Activated naive CD8-positive, alpha-beta T cell treated with anti-CD3 and anti-CD28 coated beads, Interleukin-2, amount 10 ng/mL, durations not matched to agents 7 days and 5 days (primary cell): ENCODE measurements at regions of chr20 and their contacts with region 1.

Region 1: DNA sequence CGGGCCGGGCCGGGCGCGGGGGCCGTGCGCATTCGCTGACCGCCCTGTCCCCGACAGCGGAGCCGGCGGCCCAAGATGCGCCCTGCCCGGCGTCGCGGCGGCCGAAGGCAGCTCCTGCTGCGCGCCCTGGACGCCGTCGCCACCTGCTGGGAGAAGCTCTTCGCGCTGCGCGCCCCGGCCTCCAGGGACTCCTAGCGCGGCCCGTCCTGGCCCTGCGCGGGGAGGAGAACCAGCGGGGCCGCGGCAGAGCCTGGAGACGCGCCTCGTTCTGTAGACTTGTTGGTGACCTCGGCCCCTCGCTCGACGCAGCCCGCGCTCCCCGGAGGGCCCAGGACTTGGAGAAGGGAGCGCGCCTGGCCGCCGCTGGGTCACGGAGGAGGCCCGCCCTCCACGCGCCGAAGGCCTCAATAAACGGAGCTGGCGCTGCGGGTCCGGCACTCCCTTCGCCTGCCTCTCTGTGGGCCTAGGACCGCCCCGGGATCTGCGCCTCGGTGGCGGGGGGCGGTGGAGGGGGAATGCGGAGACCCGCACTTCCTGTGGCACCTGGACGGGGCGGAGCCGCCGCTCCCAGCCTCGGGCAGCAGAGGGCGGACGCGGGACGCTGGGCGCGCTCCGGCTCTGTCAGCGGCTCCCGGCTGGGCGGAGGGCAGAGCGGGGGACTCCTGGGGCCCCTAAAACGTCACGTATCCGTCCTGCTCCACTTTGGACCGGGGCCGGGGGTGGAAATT is 2.7 kb downstream of the C20orf204 start:
- DNase-seq: peak; percentile 91
- ATAC-seq: peak; percentile 61
- H3K4me3 Mint-ChIP-seq: peak overlapping the region; percentile 71
- H3K27ac Mint-ChIP-seq: peak overlapping the region; percentile 73
- H3K4me1 Mint-ChIP-seq: peaks cover 53% of the 10 kb centered on the region
- H3K27me3 Mint-ChIP-seq: peaks cover under 1% of the 10 kb centered on the region

Region 2: GRCh38 chr20:63884506-63885263 is 154.0 kb before region 1 on chr20:
- POLR2A ChIA-PET with region 1: no interaction called
- DNase-seq: no peak
- ATAC-seq: peak; percentile 51
- H3K4me3 Mint-ChIP-seq: no peak overlapping the region
- H3K27ac Mint-ChIP-seq: no peak overlapping the region
- H3K4me1 Mint-ChIP-seq: peaks cover 12% of the 10 kb centered on the region
- H3K27me3 Mint-ChIP-seq: no peaks in the 10 kb centered on the region

Region 3: DNA sequence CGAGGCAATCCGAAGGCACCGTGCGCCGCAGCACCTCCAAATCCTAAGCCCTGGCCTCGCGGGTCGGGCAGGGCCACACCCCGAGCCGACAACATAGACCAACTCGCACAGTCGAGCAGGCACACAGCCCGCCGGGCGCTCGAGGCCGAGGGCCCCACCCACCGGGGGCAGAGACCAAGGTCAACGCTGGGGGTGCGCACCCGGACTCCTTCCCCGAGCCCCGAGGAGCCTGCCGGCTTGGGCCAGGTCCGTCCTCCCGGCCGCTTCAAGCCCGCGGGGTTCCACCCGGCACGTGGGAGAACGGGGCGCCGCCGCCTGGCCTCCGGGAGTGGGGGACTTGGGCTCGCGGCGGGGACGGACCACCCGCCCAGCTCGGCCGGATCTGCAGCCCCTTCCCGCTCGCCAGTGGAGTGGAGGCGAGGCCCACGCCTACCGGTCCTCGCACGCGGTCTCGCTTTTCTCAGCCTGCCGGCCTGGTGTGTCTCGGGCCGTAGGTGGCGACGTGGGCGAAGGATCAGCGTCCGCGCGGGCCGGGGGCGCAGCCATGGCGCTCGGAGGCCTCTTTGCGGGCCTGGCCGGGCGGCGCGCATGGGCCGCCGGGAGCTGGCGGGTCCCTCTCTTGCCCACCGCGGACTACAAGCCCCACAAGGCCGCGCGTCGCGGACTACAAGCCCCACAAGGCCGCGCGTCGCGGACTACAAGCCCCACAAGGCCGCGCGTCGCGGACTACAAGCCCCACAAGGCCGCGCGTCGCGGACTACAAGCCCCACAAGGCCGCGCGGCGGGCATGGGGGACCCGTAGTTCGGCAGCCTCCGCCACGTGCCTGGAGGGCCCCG is 82.7 kb before region 1 on chr20 and contains the start of gene UCKL1:
- POLR2A ChIA-PET with region 1: interaction called, 13 read pairs
- DNase-seq: peak; percentile 93
- ATAC-seq: peak; percentile 79
- H3K4me3 Mint-ChIP-seq: peak within 1 kb of the TSS; percentile 83
- H3K27ac Mint-ChIP-seq: peak within 1 kb of the TSS; percentile 87
- H3K4me1 Mint-ChIP-seq: peaks cover 24% of the 10 kb centered on the region
- H3K27me3 Mint-ChIP-seq: no peaks in the 10 kb centered on the region
- total RNA-seq, gene UCKL1: 45.0 to 48.4 TPM

Region 4: DNA sequence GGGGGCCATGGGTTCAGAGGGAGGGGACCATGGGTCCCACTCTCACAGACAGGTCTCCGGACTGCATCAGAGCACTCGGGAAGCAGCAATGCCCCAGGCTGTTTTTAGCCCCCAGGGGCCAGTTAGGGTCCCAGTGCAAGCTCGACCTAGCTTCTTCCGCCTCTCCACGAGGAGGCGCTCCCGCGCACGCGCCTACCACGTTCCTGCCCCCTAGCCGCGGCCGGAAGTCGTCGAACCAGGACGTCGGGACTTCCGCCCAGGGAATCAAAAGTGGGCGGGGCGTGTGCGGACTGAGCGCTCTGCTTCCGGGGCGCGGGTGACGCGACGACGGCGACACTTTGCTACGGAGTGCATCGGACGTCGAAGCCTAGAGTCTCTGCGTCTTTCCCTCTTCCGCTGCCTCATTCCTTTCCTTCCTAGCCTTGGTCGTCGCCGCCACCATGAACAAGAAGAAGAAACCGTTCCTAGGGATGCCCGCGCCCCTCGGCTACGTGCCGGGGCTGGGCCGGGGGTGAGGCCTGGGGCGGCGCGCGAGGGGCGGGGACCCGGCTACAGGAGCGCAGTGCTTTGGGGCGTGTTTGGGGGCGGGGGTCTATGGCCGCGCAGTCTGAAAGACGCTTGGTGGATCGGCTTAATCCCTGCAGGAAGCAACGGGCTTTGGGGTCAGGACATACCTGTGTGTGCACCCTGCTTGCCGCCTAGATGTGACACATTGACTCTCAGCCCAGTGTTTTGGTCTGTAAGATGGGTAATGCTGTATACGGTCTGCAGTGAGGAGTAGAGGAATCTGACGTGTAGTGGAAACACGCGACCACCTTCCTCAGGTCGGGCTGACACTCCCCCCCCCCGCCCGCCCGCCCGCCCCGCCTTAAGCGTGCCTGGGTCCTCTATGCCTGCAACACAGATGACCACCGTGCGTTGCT is 57.7 kb before region 1 on chr20 and contains the start of gene PRPF6:
- POLR2A ChIA-PET with region 1: interaction called, 142 read pairs
- DNase-seq: peak; percentile 98
- ATAC-seq: peak; percentile 62
- H3K4me3 Mint-ChIP-seq: peak within 1 kb of the TSS; percentile 96
- H3K27ac Mint-ChIP-seq: peak within 1 kb of the TSS; percentile 98
- H3K4me1 Mint-ChIP-seq: peaks cover 51% of the 10 kb centered on the region
- H3K27me3 Mint-ChIP-seq: no peaks in the 10 kb centered on the region
- total RNA-seq, gene PRPF6: 76.7 to 78.4 TPM

Region 5: GRCh38 chr20:64021124-64021975 is 17.4 kb before region 1 on chr20:
- POLR2A ChIA-PET with region 1: no interaction called
- DNase-seq: no peak
- ATAC-seq: no peak
- H3K4me3 Mint-ChIP-seq: no peak overlapping the region
- H3K27ac Mint-ChIP-seq: no peak overlapping the region
- H3K4me1 Mint-ChIP-seq: peaks cover 3% of the 10 kb centered on the region
- H3K27me3 Mint-ChIP-seq: no peaks in the 10 kb centered on the region

Region 6: GRCh38 chr20:64053841-64054661 is 15.3 kb after region 1 on chr20:
- POLR2A ChIA-PET with region 1: interaction called, 26 read pairs
- DNase-seq: no peak
- ATAC-seq: no peak
- H3K4me3 Mint-ChIP-seq: no peak overlapping the region
- H3K27ac Mint-ChIP-seq: no peak overlapping the region
- H3K4me1 Mint-ChIP-seq: peaks cover 10% of the 10 kb centered on the region
- H3K27me3 Mint-ChIP-seq: peaks cover 9% of the 10 kb centered on the region

Region 7: DNA sequence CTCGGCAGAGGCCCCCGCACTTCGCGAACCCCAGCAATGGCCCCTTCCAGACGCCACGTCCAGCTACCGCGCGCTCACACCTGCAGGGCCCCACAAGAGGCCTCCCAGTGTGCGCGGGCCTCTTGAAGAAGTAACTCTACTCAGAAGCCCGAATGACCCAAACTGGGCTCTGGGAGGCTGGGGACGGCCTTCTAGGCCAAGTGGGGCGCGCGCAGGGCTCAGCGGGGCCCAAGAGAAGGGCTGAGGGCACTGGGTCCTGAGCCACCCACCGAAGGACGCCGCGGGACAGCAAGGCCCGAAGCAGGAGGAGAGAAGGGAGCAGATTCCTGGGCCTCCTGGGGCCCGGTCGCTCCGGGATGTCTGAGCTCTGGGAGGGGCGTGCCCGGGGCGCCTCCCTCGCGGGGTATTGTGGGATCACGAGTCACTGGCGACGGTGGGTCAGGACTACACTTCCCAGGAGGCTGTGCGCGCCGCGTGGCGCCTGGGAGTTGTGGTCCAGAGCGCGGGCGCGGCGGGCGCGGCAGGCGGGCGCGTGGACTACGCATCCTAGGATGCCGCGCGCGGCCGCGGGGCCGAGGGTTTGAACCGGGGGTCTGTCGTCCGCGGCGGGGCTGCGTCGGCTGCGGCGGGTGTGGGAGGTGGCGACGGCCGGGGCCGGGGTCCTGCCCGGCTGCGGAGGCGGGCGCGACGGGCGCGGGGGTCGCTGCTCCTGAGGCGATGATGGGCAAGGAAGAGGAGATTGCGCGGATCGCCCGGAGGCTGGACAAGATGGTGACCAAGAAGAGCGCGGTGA is 24.1 kb after region 1 on chr20 and contains the start of gene TCEA2:
- POLR2A ChIA-PET with region 1: interaction called, 16 read pairs
- DNase-seq: peak; percentile 96
- ATAC-seq: peak; percentile 76
- H3K4me3 Mint-ChIP-seq: peak within 1 kb of the TSS; percentile 95
- H3K27ac Mint-ChIP-seq: peak within 1 kb of the TSS; percentile 89
- H3K4me1 Mint-ChIP-seq: peaks cover 43% of the 10 kb centered on the region
- H3K27me3 Mint-ChIP-seq: no peaks in the 10 kb centered on the region
- total RNA-seq, gene TCEA2: 65.3 to 74.9 TPM

Region 8: GRCh38 chr20:64079273-64080012 is 40.7 kb after region 1 on chr20 and contains the start of gene RGS19:
- POLR2A ChIA-PET with region 1: interaction called, 27 read pairs
- DNase-seq: peak; percentile 87
- ATAC-seq: peak; percentile 27
- H3K4me3 Mint-ChIP-seq: peak within 1 kb of the TSS; percentile 96
- H3K27ac Mint-ChIP-seq: peak within 1 kb of the TSS; percentile 94
- H3K4me1 Mint-ChIP-seq: peaks cover 35% of the 10 kb centered on the region
- H3K27me3 Mint-ChIP-seq: peaks cover 9% of the 10 kb centered on the region
- total RNA-seq, gene RGS19: 95.1 to 106 TPM